CD8-positive, alpha-beta T cell (primary cell): ENCODE measurements at regions of chr10 and their contacts with region 1.

Region 1: GRCh38 chr10:59865101-59865500 is 41.3 kb downstream of the CCDC6 start:
- DNase-seq: peak in 2 of 9 experiments; percentile 44 to 60
- ATAC-seq: peak; percentile 35
- H3K4me3 ChIP-seq: no peak overlapping the region
- H3K4me3 Mint-ChIP-seq: peak overlapping the region; percentile 5
- H3K27ac ChIP-seq: no peak overlapping the region
- H3K27ac Mint-ChIP-seq: peak overlapping the region; percentile 46
- H3K4me1 ChIP-seq: peaks cover 24% of the 10 kb centered on the region
- H3K4me1 Mint-ChIP-seq: peaks cover 63% of the 10 kb centered on the region
- H3K27me3 ChIP-seq: no peaks in the 10 kb centered on the region
- H3K27me3 Mint-ChIP-seq: no peaks in the 10 kb centered on the region
- CTCF ChIP-seq: peak; percentile 24

Region 2: GRCh38 chr10:59880971-59881510 is 15.9 kb after region 1 on chr10:
- CTCF ChIA-PET with region 1: interaction called, 6 read pairs
- POLR2A ChIA-PET with region 1: interaction called, 3 read pairs
- intact Hi-C with region 1: loop called in 1 of 2 experiments (anchors 2 kb)
- DNase-seq: peak in 6 of 9 experiments; percentile 21 to 76 (median 40)
- ATAC-seq: peak; percentile 80
- H3K4me3 ChIP-seq: no peak overlapping the region
- H3K4me3 Mint-ChIP-seq: peak overlapping the region; percentile 3
- H3K27ac ChIP-seq: no peak overlapping the region
- H3K27ac Mint-ChIP-seq: peak overlapping the region; percentile 9
- H3K4me1 ChIP-seq: peaks cover 37% of the 10 kb centered on the region
- H3K4me1 Mint-ChIP-seq: peaks cover 82% of the 10 kb centered on the region
- H3K27me3 ChIP-seq: no peaks in the 10 kb centered on the region
- H3K27me3 Mint-ChIP-seq: no peaks in the 10 kb centered on the region
- CTCF ChIP-seq: no peak

Region 3: DNA sequence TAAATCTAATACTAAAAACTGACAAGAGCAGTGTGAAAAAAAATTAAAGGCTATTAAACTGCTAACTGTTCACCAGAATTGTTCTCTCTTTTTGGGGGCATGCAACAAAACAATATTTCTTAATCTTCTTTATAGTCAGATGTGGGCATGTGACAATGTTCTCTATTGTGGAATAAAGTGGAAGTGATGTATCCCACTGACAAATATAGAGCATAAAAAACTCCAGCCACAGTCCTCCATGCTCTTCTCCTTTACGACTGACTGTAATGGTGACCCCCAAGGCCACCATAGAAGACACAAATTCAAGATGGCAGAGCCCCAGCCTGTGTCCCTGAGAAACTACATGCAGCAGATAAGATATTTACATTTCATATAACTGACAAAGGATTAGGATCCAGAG is 52.8 kb after region 1 on chr10:
- CTCF ChIA-PET with region 1: no interaction called
- POLR2A ChIA-PET with region 1: no interaction called
- intact Hi-C with region 1: no loop called
- DNase-seq: no peak
- ATAC-seq: no peak
- H3K4me3 ChIP-seq: no peak overlapping the region
- H3K4me3 Mint-ChIP-seq: no peak overlapping the region
- H3K27ac ChIP-seq: no peak overlapping the region
- H3K27ac Mint-ChIP-seq: no peak overlapping the region
- H3K4me1 ChIP-seq: no peaks in the 10 kb centered on the region
- H3K4me1 Mint-ChIP-seq: no peaks in the 10 kb centered on the region
- H3K27me3 ChIP-seq: peaks cover 0 to 7% of the 10 kb centered on the region in 2 experiments
- H3K27me3 Mint-ChIP-seq: no peaks in the 10 kb centered on the region
- CTCF ChIP-seq: no peak